Endothelial cell of umbilical vein (primary cell): ENCODE measurements at regions of chr4 and their contacts with region 1.

Region 1: GRCh38 chr4:53804719-53805118 is 213.4 kb upstream of the LNX1 start:
- DNase-seq: peak; percentile 11
- H3K4me3 ChIP-seq: no peak overlapping the region
- H3K27ac ChIP-seq: no peak overlapping the region
- H3K4me1 ChIP-seq: no peaks in the 10 kb centered on the region
- H3K27me3 ChIP-seq: peaks cover 4 to 17% of the 10 kb centered on the region in 2 experiments
- CTCF ChIP-seq: peak; percentile 30 to 33
- POLR2A ChIP-seq: no peak

Region 2: DNA sequence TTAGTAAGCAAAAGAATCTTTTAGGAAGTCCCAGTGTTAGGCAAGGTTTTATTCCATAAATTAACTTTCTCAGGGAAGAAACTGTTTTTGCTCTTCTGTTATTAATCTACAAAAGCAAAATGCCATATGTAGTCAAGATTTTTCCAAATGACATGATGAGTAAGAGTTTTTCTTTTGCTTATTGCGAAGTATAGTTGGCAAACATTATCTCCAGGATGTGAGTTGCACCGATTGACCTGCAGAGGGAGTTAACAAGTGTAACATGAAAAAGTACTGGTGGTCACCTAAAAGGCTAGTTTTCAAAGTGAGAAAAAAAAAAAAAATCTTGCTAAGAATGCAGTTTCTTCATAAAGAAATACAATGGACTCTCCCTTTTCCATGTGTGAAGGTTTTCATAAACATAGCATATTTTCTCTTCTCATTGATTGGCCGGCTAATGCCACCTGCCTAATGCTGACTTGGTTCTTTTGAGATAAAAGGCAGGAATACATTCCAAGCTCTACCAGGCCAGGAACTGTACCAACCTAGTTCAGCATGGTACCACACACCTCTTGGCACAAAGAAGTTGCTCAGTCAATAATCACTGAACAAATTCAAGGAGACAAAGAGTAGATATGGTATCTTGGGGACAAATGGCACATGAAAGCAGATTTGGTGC is 313.6 kb before region 1 on chr4:
- CTCF ChIA-PET with region 1: interaction called, 13 read pairs
- POLR2A ChIA-PET with region 1: no interaction called
- dilution Hi-C with region 1: no loop called
- intact Hi-C with region 1: loop called (anchors 10 kb)
- DNase-seq: peak; percentile 85
- H3K4me3 ChIP-seq: no peak overlapping the region
- H3K27ac ChIP-seq: no peak overlapping the region
- H3K4me1 ChIP-seq: peaks cover 6% of the 10 kb centered on the region
- H3K27me3 ChIP-seq: no peaks in the 10 kb centered on the region
- CTCF ChIP-seq: peak; percentile 52 to 55
- POLR2A ChIP-seq: no peak

Region 3: DNA sequence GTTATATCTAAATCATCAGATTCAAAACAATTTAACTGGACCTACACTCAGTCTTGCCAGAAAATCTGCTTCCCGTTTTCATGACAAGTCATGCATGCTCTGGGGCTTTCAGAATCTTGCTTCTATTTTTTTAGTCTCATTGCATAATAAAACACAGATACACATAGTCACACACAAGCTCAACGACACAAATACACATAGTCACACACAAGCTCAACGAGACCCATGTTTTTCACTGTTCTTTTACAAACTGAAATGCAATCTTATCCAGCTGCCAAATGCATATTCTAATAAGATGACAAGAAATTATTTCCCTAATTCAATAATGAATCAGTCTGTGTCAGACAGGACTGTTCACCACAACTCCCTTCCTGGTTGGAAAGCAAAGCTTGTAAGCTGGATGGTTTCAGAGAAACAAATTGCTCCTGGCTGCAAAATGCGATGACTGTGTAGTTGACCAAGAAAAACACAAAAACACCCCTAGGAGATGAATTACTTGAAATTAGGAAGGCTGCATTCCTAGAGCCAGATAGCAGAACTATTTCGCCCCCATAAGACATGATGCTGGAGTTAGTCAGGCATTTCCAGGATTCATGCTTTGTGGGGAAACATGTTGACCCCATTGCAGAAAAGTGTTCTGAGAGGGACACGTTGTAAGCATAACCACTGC is 51.0 kb after region 1 on chr4:
- CTCF ChIA-PET with region 1: no interaction called
- POLR2A ChIA-PET with region 1: no interaction called
- dilution Hi-C with region 1: no loop called
- intact Hi-C with region 1: loop called (anchors 1 kb)
- DNase-seq: no peak
- H3K4me3 ChIP-seq: no peak overlapping the region
- H3K27ac ChIP-seq: no peak overlapping the region
- H3K4me1 ChIP-seq: no peaks in the 10 kb centered on the region
- H3K27me3 ChIP-seq: peaks cover 0 to 7% of the 10 kb centered on the region in 2 experiments
- CTCF ChIP-seq: no peak
- POLR2A ChIP-seq: no peak

Region 4: DNA sequence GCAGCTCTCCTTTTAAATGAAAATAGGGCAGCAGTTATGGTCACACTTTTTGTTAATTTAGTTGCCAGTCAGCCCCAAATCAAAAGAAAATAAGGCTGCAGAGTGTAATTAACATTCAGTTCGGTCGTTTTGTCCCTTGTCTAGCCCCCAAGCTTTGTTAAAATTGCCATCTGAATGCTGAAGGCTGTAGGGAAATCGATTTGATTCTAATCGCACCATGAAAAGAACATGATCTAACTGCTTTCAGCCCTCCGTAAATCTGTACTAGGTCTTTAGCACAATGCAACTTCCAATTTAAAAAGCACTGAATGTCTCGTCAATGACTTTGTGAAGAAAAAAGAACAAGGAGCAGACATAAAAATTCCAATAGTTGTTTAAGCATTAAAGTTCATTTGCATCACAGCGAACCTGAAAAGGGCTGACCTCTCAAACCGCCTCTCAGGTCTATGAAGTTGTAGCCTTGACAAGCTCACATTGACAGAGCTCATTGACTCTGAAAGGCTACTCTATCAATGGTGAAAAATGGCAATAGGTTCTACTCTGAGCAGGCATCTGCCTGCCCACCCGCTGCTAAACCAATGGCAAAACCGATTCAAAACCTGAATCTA is 210.8 kb after region 1 on chr4:
- CTCF ChIA-PET with region 1: no interaction called
- POLR2A ChIA-PET with region 1: no interaction called
- dilution Hi-C with region 1: no loop called
- intact Hi-C with region 1: no loop called
- DNase-seq: no peak
- H3K4me3 ChIP-seq: no peak overlapping the region
- H3K27ac ChIP-seq: no peak overlapping the region
- H3K4me1 ChIP-seq: no peaks in the 10 kb centered on the region
- H3K27me3 ChIP-seq: no peaks in the 10 kb centered on the region
- CTCF ChIP-seq: no peak
- POLR2A ChIP-seq: no peak